ENCODE measurements at regions of chr5 and their contacts with region 1.

Region 1: DNA sequence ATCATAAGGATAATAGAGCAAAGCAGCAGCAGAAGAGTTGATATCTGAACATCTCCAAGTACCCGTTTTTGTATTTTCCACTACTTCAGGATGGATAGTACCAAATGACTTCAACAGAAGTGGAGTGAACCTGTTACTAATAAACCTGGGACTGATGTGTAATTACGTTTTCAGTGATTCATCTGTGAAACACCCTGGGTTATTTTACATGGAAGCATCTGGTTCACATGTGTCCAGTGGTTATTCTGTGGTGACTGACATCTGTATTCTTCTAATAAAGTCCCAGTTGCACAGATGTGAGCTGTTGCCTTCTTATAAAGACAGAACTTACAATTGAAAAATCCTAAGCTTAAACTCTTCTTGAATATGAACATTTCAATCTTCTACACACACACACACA is 139.7 kb upstream of the VCAN start:
- DNase-seq: no peak
- H3K4me3 ChIP-seq: no peak overlapping the region
- H3K27ac ChIP-seq: no peak overlapping the region
- H3K4me1 ChIP-seq: no peaks in the 10 kb centered on the region
- H3K27me3 ChIP-seq: no peaks in the 10 kb centered on the region
- CTCF ChIP-seq: no peak

Region 2: DNA sequence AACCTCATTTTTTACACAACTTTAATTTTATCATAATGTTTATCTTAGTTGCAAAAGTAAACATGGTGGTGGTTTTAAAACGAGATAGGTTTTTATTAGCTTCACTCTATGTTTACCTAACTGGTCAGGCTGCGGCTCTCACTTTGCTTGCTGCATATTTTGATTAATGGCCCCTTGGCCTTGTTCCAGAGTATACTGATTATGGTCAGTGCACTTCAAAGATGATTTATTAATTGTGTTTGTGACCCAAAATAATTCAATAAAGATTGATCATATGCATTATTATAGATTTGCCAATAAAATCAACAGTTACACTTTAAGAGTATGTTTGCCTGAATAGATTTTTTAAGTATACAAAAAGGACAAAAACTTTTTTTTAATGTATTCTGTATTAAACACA is 66.5 kb before region 1 on chr5:
- intact Hi-C with region 1: no loop called
- DNase-seq: no peak
- H3K4me3 ChIP-seq: no peak overlapping the region
- H3K27ac ChIP-seq: no peak overlapping the region
- H3K4me1 ChIP-seq: no peaks in the 10 kb centered on the region
- H3K27me3 ChIP-seq: no peaks in the 10 kb centered on the region
- CTCF ChIP-seq: no peak

Region 3: DNA sequence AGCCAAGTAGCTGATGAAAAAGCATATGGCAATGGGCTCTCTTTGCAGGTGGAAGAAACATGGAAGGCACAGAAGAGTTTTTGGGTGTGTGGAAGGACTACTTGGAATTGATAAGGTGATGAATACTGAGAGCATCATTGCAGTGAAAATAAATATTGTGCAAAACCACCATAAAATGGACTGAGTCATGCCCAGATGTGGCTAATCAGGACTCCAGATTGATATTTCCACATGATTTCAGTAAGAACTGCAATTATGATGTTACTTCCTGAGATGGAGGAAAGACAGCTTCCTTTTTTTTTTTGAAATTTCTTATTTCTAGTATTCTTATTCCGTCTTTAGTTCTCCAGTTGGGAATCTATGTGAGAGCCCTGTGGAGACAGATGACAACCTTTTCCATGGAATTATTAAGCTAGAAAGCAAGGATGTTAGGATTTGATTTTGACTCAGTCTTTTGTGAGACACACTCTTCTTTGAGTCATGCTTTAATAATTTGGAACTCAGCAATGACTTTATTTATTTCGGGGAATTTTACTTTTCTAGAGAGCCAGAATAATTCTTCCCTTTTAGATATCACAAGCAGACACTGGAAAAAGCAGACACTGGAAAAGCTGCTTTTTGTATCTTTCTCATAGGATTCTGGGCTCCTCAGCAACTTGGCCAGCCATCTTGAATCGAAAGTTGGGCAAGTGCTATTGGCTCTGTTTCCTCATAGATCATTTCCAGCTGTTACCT is 45.5 kb after region 1 on chr5:
- intact Hi-C with region 1: loop called (anchors 1 kb)
- DNase-seq: no peak
- H3K4me3 ChIP-seq: no peak overlapping the region
- H3K27ac ChIP-seq: peak overlapping the region in 1 of 2 donors; percentile 27
- H3K4me1 ChIP-seq: peaks cover 0 to 4% of the 10 kb centered on the region in 2 donors
- H3K27me3 ChIP-seq: no peaks in the 10 kb centered on the region
- CTCF ChIP-seq: no peak

Measured in ascending aorta (tissue), 2 donors.